Endothelial cell of umbilical vein (primary cell): ENCODE measurements at regions of chr14 and their contacts with region 1.

Region 1: GRCh38 chr14:30610787-30611343 is 11.3 kb upstream of the SCFD1 start:
- DNase-seq: peak; percentile 91
- H3K4me3 ChIP-seq: peak overlapping the region in 1 of 3 experiments; percentile 5
- H3K27ac ChIP-seq: peak overlapping the region; percentile 40
- H3K4me1 ChIP-seq: peaks cover 22% of the 10 kb centered on the region
- H3K27me3 ChIP-seq: no peaks in the 10 kb centered on the region
- CTCF ChIP-seq: peak; percentile 13 to 26
- POLR2A ChIP-seq: no peak

Region 2: DNA sequence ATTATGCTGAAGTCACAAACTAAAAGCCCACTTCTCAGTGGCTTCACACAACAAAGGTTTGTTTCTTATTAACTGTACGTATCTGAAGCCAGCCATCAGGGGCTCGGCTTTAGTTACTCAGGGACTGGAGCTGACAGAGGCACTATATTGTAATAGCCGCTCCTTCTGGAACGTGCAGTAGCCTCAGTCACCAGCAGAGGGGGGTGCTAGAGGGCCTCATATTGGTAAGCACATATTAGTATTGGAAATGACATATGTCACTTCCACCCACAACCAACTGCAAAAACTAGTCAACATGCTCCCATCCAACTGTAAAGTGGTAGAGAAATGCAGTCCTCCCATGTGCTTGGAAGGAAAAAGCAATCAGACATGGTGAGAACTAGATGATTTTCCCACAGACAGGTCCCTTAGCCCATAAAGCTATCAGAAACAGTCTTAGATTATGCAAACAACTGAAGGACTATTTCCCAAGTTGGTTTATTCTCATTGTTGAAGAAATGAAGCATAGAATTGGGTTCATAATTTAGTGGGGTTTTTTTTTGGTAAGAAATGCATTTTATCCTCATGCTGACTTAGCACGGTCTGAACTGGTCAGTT is 235.5 kb before region 1 on chr14:
- CTCF ChIA-PET with region 1: interaction called, 32 read pairs
- POLR2A ChIA-PET with region 1: no interaction called
- dilution Hi-C with region 1: no loop called
- intact Hi-C with region 1: no loop called
- DNase-seq: peak; percentile 68
- H3K4me3 ChIP-seq: no peak overlapping the region
- H3K27ac ChIP-seq: no peak overlapping the region
- H3K4me1 ChIP-seq: no peaks in the 10 kb centered on the region
- H3K27me3 ChIP-seq: no peaks in the 10 kb centered on the region
- CTCF ChIP-seq: peak; percentile 80 to 86
- POLR2A ChIP-seq: no peak

Region 3: GRCh38 chr14:30532264-30532663 is 78.6 kb before region 1 on chr14:
- CTCF ChIA-PET with region 1: no interaction called
- POLR2A ChIA-PET with region 1: no interaction called
- dilution Hi-C with region 1: no loop called
- intact Hi-C with region 1: no loop called
- DNase-seq: no peak
- H3K4me3 ChIP-seq: no peak overlapping the region
- H3K27ac ChIP-seq: no peak overlapping the region
- H3K4me1 ChIP-seq: no peaks in the 10 kb centered on the region
- H3K27me3 ChIP-seq: peaks cover under 1 to 8% of the 10 kb centered on the region in 2 experiments
- CTCF ChIP-seq: no peak
- POLR2A ChIP-seq: no peak

Region 4: DNA sequence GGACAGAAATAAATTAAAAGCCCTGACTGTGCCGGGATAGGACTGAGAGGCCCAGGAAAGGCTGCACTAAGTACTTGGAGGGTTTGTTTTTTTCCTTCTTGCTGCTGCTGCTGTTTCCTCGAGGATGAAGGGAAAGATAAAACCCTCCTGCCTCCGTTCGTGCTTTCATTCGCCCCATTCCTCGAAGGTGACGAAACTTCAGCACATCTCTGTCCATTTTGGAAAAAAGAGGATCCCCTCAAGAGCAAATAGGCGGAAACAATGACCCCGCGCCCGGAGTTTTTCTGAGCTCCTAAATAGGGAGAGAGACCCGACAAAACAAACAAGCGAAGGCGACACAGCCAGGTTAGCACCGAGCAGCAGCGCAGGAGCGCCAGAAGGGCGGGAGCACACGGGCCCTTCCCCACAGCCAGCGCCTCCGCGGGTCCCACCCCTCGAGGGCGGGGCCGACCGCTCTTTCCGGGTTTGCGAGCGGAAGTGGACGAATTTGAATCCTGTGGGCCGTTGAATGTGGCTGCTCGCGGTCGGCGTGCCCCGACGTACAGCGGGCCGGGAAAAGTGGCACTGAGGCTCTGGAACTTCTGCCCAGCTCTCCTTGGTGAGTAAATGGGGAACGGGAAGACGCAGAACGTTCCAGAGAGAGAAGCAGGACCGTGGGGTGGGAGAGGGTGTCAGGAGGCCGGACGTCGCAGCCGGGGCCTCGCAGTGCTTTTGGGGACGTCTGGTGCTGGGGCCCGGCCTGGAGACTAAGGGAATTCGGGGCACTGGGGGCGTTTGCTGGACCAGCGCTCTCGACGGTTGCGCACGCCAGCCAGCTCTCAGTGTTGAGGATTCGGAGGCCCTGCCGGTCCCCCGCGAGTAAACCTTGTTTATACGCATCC is 52.0 kb before region 1 on chr14 and contains the start of gene G2E3:
- CTCF ChIA-PET with region 1: interaction called, 3 read pairs
- POLR2A ChIA-PET with region 1: no interaction called
- dilution Hi-C with region 1: no loop called
- intact Hi-C with region 1: loop called (anchors 2 kb)
- DNase-seq: peak; percentile 89
- H3K4me3 ChIP-seq: peak within 1 kb of the TSS; percentile 90 to 97 (median 94)
- H3K27ac ChIP-seq: peak within 1 kb of the TSS; percentile 66
- H3K4me1 ChIP-seq: peaks cover 12% of the 10 kb centered on the region
- H3K27me3 ChIP-seq: no peaks in the 10 kb centered on the region
- CTCF ChIP-seq: no peak
- POLR2A ChIP-seq: peak; percentile 86
- total RNA-seq, gene G2E3: 26.6 and 34.8 TPM in 2 replicates

Region 5: GRCh38 chr14:30621940-30622830 is 11.3 kb after region 1 on chr14 and contains the start of gene SCFD1:
- CTCF ChIA-PET with region 1: interaction called, 14 read pairs
- POLR2A ChIA-PET with region 1: no interaction called
- dilution Hi-C with region 1: no loop called
- intact Hi-C with region 1: loop called (anchors 1 kb)
- DNase-seq: peak; percentile 89
- H3K4me3 ChIP-seq: peak within 1 kb of the TSS; percentile 27 to 86 (median 78)
- H3K27ac ChIP-seq: peak within 1 kb of the TSS; percentile 68
- H3K4me1 ChIP-seq: peaks cover 7% of the 10 kb centered on the region
- H3K27me3 ChIP-seq: no peaks in the 10 kb centered on the region
- CTCF ChIP-seq: no peak
- POLR2A ChIP-seq: peak; percentile 96
- total RNA-seq, gene SCFD1: 50.4 and 59.9 TPM in 2 replicates

Region 6: DNA sequence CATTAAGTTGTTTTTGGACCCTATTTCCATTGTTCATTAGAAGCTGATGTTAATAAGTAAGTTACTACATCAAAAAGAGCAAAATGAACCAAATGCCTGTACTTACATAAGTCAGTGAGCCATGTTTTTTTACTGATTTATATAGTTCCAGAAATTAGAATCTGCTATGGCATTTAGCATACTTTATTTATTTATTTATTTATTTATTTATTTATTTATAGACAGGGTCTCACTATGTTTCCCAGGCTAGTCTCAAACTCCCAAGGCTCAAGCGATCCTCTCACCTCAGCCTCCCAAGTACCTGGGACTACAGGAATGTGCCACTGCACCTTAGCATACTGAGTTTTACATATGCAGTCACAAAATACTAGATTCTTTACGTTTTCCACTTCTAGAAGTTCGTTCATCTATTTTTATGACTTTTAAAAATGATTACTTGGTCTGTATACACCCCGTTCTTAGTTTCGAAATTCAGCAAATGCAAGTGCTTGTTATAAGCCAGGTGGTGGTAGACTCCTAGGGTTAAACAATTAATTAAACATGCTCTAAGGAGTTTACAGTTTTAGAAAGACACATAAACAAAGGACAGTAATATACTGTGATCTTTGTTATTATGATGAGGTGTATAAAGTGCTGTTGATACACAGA is 81.0 kb after region 1 on chr14:
- CTCF ChIA-PET with region 1: no interaction called
- POLR2A ChIA-PET with region 1: no interaction called
- dilution Hi-C with region 1: no loop called
- intact Hi-C with region 1: no loop called
- DNase-seq: no peak
- H3K4me3 ChIP-seq: no peak overlapping the region
- H3K27ac ChIP-seq: no peak overlapping the region
- H3K4me1 ChIP-seq: peaks cover 12% of the 10 kb centered on the region
- H3K27me3 ChIP-seq: no peaks in the 10 kb centered on the region
- CTCF ChIP-seq: no peak
- POLR2A ChIP-seq: no peak